PC-3 (cell line): ENCODE measurements at regions of chr5 and their contacts with region 1.

Region 1: GRCh38 chr5:87746891-87747377 is 334.2 kb upstream of the CCNH start:
- DNase-seq: peak; percentile 100
- ATAC-seq: peak; percentile 86
- H3K4me3 ChIP-seq: no peak overlapping the region; the same call in 1 of the 2 replicates
- H3K27ac ChIP-seq: peak overlapping the region; percentile 78
- H3K4me1 ChIP-seq: peaks cover 39% of the 10 kb centered on the region
- H3K27me3 ChIP-seq: no peaks in the 10 kb centered on the region
- CTCF ChIP-seq: no peak

Region 2: GRCh38 chr5:87541033-87541432 is 205.9 kb before region 1 on chr5:
- CTCF ChIA-PET with region 1: no interaction called
- POLR2A ChIA-PET with region 1: no interaction called
- intact Hi-C with region 1: loop called (anchors 1 kb)
- DNase-seq: peak; percentile 90
- ATAC-seq: peak; percentile 95
- H3K4me3 ChIP-seq: no peak overlapping the region
- H3K27ac ChIP-seq: no peak overlapping the region
- H3K4me1 ChIP-seq: peaks cover 6% of the 10 kb centered on the region; the same call in 1 of the 2 replicates
- H3K27me3 ChIP-seq: peaks cover 4% of the 10 kb centered on the region; the same call in 1 of the 2 replicates
- CTCF ChIP-seq: peak; percentile 57

Region 3: DNA sequence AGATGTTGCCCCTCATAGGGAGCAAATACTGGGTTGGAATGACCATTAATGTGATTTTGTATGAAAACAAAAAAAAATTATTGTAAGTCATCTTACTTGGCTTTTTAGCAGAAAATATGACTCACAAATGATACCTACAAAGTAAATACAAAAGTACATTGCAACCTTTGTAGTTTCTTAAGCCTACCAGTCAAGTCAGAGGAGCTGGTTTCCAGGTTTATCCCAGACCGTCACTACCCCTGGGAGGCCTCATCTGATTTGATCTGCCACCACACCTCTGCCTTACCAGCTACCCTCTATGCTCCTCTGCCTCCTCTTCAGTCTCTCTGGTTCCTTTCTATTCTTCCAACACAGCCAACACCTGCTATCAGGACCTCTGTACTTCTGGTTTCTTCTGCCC is 15.7 kb after region 1 on chr5:
- CTCF ChIA-PET with region 1: no interaction called
- POLR2A ChIA-PET with region 1: no interaction called
- intact Hi-C with region 1: loop called (anchors 1 kb)
- DNase-seq: peak; percentile 90
- ATAC-seq: peak; percentile 99
- H3K4me3 ChIP-seq: no peak overlapping the region
- H3K27ac ChIP-seq: peak overlapping the region; percentile 48
- H3K4me1 ChIP-seq: peaks cover 22% of the 10 kb centered on the region
- H3K27me3 ChIP-seq: no peaks in the 10 kb centered on the region
- CTCF ChIP-seq: no peak